Activated naive CD4-positive, alpha-beta T cell treated with anti-CD3 and anti-CD28 coated beads for 36 hours (primary cell): ENCODE measurements at regions of chr16 and their contacts with region 1.

Region 1: GRCh38 chr16:53822936-53823529 is 119.1 kb downstream of the FTO start:
- DNase-seq: peak; percentile 34
- H3K4me3 Mint-ChIP-seq: no peak overlapping the region
- H3K27ac Mint-ChIP-seq: no peak overlapping the region
- H3K4me1 Mint-ChIP-seq: peaks cover 19% of the 10 kb centered on the region
- H3K27me3 Mint-ChIP-seq: no peaks in the 10 kb centered on the region

Region 2: GRCh38 chr16:53913099-53913870 is 90.3 kb after region 1 on chr16:
- CTCF ChIA-PET with region 1: no interaction called
- intact Hi-C with region 1: loop called (anchors 5 kb)
- DNase-seq: peak; percentile 42
- H3K4me3 Mint-ChIP-seq: peak overlapping the region; percentile 23
- H3K27ac Mint-ChIP-seq: peak overlapping the region; percentile 79
- H3K4me1 Mint-ChIP-seq: peaks cover 8% of the 10 kb centered on the region
- H3K27me3 Mint-ChIP-seq: no peaks in the 10 kb centered on the region